ENCODE measurements at regions of chr1 and their contacts with region 1.

Region 1: DNA sequence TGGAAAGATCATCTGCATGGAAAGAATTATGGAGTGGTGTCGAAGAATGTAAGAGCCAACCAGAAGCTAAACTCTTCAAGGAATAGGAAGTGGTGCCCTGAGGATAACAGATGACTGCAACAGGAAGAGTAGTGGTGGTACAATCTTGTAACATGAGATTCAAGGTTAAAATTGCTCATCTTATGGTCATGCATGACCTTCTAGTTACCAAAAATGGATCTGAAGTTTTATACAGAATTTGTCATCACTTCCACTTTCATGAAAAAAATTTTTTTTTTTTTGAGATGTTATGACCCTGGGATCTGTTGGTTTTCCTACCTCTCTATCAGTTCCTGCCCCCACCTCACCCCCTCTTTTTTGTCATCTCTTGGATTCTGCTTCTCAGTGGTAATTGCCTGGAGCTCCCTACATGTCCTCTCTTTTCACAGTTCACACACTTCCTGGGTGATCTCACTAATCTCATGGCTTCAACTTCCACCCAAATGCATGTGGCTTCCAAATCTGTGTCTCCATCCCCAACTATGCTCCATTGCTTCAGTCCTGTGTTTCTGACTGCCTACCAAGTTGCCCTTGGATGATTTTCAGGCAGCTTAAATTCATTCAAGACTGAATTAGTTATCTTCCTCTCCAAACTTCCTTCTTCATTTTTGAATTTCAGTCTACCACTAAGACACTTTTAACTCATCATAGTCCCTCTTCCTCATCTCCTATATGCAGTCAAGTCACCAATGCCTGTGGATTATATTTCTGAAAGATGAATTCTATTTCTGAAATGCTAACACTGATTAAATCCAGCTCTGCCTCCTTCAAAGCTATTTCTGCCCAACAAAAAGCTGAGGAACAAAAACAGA is 48.4 kb downstream of the SLAMF6 start:
- DNase-seq: no peak
- H3K4me3 Mint-ChIP-seq: no peak overlapping the region
- H3K27ac Mint-ChIP-seq: no peak overlapping the region
- H3K4me1 Mint-ChIP-seq: peaks cover 6% of the 10 kb centered on the region
- H3K27me3 Mint-ChIP-seq: no peaks in the 10 kb centered on the region

Region 2: DNA sequence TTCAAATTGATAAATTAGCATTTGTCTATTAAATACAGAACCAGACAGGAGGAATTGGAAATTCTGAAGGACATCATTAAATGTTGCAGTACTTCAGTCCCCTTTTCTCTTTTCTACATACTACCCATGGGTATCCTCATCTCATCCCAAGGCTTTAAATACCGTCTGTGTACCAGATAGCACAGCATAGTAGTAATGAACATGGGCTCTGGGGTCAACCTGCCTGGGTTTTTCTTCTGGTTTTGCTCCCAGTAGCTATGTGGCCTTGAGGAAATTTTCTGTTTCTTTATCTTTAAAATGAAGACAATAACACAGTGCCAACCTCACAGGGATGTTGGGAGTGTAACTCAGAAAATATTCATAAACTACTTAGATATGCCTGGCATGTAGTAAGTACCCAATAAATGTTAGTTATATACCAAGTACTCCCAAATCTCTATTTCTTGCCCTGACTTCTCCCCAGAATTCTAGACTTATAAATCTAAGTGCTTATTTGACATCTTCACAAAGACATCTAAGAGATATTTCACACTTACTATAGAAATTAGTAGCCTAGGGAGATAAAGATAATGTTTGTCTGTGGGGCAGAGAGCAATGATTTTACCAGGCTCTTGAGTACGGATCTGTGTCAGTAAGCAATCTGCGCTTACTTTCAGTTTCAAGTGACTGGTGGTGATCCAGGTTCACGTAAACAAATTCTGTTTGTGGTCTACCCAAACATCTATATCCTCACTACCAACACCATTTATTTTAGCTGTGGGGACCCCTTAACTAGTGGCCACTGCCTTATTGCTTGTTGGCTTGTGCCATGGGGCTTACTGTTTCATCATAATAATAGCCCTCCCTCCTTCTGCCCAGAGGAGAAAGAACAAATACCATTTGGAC is 36.9 kb before region 1 on chr1:
- intact Hi-C with region 1: loop called (anchors 2 kb)
- DNase-seq: peak; percentile 22
- H3K4me3 Mint-ChIP-seq: peak overlapping the region; percentile 43
- H3K27ac Mint-ChIP-seq: peak overlapping the region; percentile 73
- H3K4me1 Mint-ChIP-seq: peaks cover 28% of the 10 kb centered on the region
- H3K27me3 Mint-ChIP-seq: no peaks in the 10 kb centered on the region

Region 3: DNA sequence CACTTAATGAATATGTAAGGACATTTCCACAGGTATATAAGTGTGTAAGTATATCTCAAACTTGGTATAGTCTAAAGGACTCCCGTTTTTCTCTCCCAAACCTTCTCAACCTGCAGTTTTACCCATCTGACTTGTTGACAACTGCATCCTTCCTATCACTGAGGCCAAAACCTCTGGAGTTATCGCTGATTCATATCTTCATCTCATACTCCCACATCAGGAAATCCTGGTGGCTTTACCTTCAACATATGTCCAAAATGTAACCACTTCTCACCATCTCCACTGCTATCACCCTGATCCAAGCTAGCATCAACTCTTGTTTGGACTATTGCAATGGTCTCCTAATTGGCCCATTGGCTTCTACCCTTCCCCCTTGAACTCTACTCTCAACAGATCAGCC is 18.0 kb after region 1 on chr1:
- intact Hi-C with region 1: loop called (anchors 1 kb)
- DNase-seq: no peak
- H3K4me3 Mint-ChIP-seq: no peak overlapping the region
- H3K27ac Mint-ChIP-seq: no peak overlapping the region
- H3K4me1 Mint-ChIP-seq: peaks cover 17% of the 10 kb centered on the region
- H3K27me3 Mint-ChIP-seq: no peaks in the 10 kb centered on the region

Region 4: GRCh38 chr1:160503087-160503486 is 28.5 kb after region 1 on chr1:
- intact Hi-C with region 1: no loop called
- DNase-seq: no peak
- H3K4me3 Mint-ChIP-seq: no peak overlapping the region
- H3K27ac Mint-ChIP-seq: no peak overlapping the region
- H3K4me1 Mint-ChIP-seq: peaks cover 13% of the 10 kb centered on the region
- H3K27me3 Mint-ChIP-seq: no peaks in the 10 kb centered on the region

Region 5: GRCh38 chr1:160539990-160540858 is 65.6 kb after region 1 on chr1:
- intact Hi-C with region 1: loop called (anchors 1 kb)
- DNase-seq: peak; percentile 66
- H3K4me3 Mint-ChIP-seq: peak overlapping the region; percentile 56
- H3K27ac Mint-ChIP-seq: peak overlapping the region; percentile 83
- H3K4me1 Mint-ChIP-seq: peaks cover 48% of the 10 kb centered on the region
- H3K27me3 Mint-ChIP-seq: no peaks in the 10 kb centered on the region

Region 6: GRCh38 chr1:160607672-160608032 is 133.0 kb after region 1 on chr1:
- intact Hi-C with region 1: no loop called
- DNase-seq: no peak
- H3K4me3 Mint-ChIP-seq: no peak overlapping the region
- H3K27ac Mint-ChIP-seq: peak overlapping the region; percentile 60
- H3K4me1 Mint-ChIP-seq: peaks cover 53% of the 10 kb centered on the region
- H3K27me3 Mint-ChIP-seq: no peaks in the 10 kb centered on the region

Region 7: GRCh38 chr1:160795951-160796383 is 321.4 kb after region 1 on chr1 and contains the start of gene LY9:
- intact Hi-C with region 1: loop called (anchors 5 kb)
- DNase-seq: peak; percentile 79
- H3K4me3 Mint-ChIP-seq: peak within 1 kb of the TSS; percentile 75
- H3K27ac Mint-ChIP-seq: peak within 1 kb of the TSS; percentile 80
- H3K4me1 Mint-ChIP-seq: peaks cover 62% of the 10 kb centered on the region
- H3K27me3 Mint-ChIP-seq: no peaks in the 10 kb centered on the region
- total RNA-seq, gene LY9: 0.28 and 0.34 TPM in 2 replicates

Measured in activated T-helper 2 cell treated with anti-CD3 and anti-CD28 coated beads, Interferon-gamma antibody, Interleukin-2, Interleukin-4, amounts not matched to agents 10 μg/mL and 5 μg/mL and 100 μg/mL, durations not matched to agents 14 hours and 24 hours and 36 hours (primary cell).